Activated CD4-positive, alpha-beta memory T cell treated with anti-CD3 and anti-CD28 coated beads, Interleukin-2, amount 10 ng/mL, durations not matched to agents 7 days and 5 days (primary cell): ENCODE measurements at regions of chr9 and their contacts with region 1.

Region 1: GRCh38 chr9:89743573-89744361 is 139.0 kb downstream of the GADD45G start:
- DNase-seq: peak; percentile 81
- H3K4me3 Mint-ChIP-seq: peak overlapping the region; percentile 41
- H3K27ac Mint-ChIP-seq: peak overlapping the region; percentile 96
- H3K4me1 Mint-ChIP-seq: peaks cover 85% of the 10 kb centered on the region
- H3K27me3 Mint-ChIP-seq: no peaks in the 10 kb centered on the region

Region 2: DNA sequence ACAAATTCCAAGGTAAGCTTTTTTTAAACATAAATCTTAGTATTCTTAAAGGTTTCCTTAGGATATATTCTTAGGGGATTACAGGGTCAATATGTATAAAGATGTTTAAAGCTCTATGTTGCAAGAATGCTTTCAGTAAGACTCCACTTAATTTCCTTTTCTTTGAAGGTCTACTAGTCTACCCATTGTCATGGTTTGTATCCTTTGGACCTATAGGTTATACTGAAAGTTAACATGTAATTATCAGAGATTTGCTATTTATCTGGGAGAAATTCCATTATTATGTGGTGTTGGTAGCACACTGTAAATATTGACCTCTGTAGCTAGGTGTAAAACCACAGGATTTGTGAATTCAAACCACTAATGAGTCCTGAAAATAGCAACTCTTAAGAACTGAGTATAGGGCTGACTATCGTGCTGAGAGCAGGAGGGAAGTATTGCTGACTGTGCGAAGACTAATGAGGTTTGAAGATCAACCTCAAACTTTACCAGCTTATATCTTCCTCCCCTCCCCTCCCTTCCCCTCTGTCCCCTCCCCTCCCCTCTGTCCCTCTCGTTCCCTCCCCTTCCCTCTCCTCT is 53.3 kb before region 1 on chr9:
- CTCF ChIA-PET with region 1: interaction called, 6 read pairs
- POLR2A ChIA-PET with region 1: interaction called, 17 read pairs
- DNase-seq: no peak
- H3K4me3 Mint-ChIP-seq: no peak overlapping the region
- H3K27ac Mint-ChIP-seq: peak overlapping the region; percentile 58
- H3K4me1 Mint-ChIP-seq: peaks cover 45% of the 10 kb centered on the region
- H3K27me3 Mint-ChIP-seq: no peaks in the 10 kb centered on the region

Region 3: GRCh38 chr9:89701221-89701798 is 42.5 kb before region 1 on chr9:
- CTCF ChIA-PET with region 1: interaction called, 5 read pairs
- POLR2A ChIA-PET with region 1: interaction called, 46 read pairs
- DNase-seq: peak; percentile 80
- H3K4me3 Mint-ChIP-seq: peak overlapping the region; percentile 76
- H3K27ac Mint-ChIP-seq: peak overlapping the region; percentile 89
- H3K4me1 Mint-ChIP-seq: peaks cover 79% of the 10 kb centered on the region
- H3K27me3 Mint-ChIP-seq: no peaks in the 10 kb centered on the region

Region 4: DNA sequence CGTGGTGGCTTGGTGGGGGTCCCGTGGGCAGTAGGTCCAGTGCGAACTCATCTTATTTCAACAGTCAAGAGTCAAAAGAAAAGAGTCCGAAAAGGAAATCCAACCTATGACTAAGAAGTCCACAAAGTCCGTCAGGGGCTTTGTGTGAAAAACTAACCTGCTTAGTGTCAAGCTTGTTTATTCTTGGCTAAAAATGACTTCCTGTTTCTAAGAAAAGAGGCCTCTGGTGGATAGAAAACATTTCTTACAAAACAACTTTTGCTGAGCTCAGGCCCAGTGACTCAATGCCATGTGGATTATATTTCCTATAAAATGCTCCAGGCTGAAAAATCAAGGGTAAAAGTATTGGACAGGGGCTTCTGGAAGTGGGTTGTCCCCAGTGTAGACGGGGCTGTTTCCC is 33.1 kb before region 1 on chr9:
- CTCF ChIA-PET with region 1: interaction called, 16 read pairs
- POLR2A ChIA-PET with region 1: interaction called, 34 read pairs
- DNase-seq: no peak
- H3K4me3 Mint-ChIP-seq: no peak overlapping the region
- H3K27ac Mint-ChIP-seq: peak overlapping the region; percentile 80
- H3K4me1 Mint-ChIP-seq: peaks cover 92% of the 10 kb centered on the region
- H3K27me3 Mint-ChIP-seq: no peaks in the 10 kb centered on the region

Region 5: DNA sequence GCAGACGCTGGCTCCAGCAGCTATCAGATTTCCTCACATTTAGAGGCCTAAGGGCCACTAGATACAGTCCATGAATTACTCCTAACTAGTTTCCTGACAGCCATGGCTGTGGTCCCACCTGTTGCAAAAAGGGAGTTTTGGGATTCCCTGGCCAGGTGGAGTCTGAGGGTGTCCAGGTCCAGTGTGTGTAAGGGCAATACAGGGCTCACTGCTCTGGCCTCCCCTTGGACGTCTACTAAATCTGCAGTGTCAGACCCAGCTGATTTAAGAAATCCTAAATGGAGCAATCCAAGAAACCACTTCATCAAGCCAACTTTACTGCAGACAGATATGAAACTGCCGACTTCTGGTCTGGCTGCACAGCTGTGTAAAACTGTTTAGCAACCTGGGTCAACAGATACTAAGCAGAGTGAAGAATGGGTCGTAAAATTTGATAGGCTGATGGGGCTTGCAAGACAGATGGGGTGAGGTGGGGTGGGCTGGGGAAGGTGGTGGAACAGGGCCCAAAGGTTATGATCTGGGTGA is 22.5 kb before region 1 on chr9:
- CTCF ChIA-PET with region 1: interaction called, 16 read pairs
- POLR2A ChIA-PET with region 1: interaction called, 34 read pairs
- DNase-seq: no peak
- H3K4me3 Mint-ChIP-seq: no peak overlapping the region
- H3K27ac Mint-ChIP-seq: no peak overlapping the region
- H3K4me1 Mint-ChIP-seq: peaks cover 39% of the 10 kb centered on the region
- H3K27me3 Mint-ChIP-seq: no peaks in the 10 kb centered on the region

Region 6: GRCh38 chr9:89732295-89732938 is 11.3 kb before region 1 on chr9:
- CTCF ChIA-PET with region 1: interaction called, 4 read pairs
- POLR2A ChIA-PET with region 1: interaction called, 14 read pairs
- DNase-seq: no peak
- H3K4me3 Mint-ChIP-seq: no peak overlapping the region
- H3K27ac Mint-ChIP-seq: no peak overlapping the region
- H3K4me1 Mint-ChIP-seq: peaks cover 9% of the 10 kb centered on the region
- H3K27me3 Mint-ChIP-seq: peaks cover 4% of the 10 kb centered on the region

Region 7: DNA sequence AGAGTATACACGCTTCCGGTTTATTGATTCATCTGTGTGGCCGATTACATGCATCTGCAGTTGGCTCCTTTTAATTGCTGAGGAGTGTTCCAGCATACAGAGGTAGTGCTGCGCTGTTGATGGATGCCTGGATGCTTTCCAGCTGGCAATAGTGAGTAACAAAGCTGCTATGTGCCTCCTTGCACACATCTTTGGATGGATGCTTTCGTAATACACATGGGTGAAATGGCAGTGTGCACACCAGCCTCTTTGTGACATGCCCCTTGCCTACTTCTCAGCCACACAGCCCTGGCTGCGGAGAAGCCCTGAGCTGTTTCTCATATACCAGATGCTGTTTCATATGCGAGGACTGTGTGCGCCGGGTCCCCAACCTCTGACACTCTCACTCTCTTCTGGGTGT is 12.1 kb after region 1 on chr9:
- CTCF ChIA-PET with region 1: interaction called, 6 read pairs
- POLR2A ChIA-PET with region 1: interaction called, 14 read pairs
- DNase-seq: no peak
- H3K4me3 Mint-ChIP-seq: no peak overlapping the region
- H3K27ac Mint-ChIP-seq: no peak overlapping the region
- H3K4me1 Mint-ChIP-seq: peaks cover 7% of the 10 kb centered on the region
- H3K27me3 Mint-ChIP-seq: peaks cover 6% of the 10 kb centered on the region